Activated naive CD4-positive, alpha-beta T cell treated with anti-CD3 and anti-CD28 coated beads, Interleukin-2, amount 10 ng/mL, durations not matched to agents 7 days and 5 days (primary cell): ENCODE measurements at regions of chr1 and their contacts with region 1.

Region 1: GRCh38 chr1:205658943-205659581 is 21.2 kb downstream of the SLC45A3 start:
- DNase-seq: peak; percentile 86
- H3K4me3 Mint-ChIP-seq: no peak overlapping the region
- H3K27ac Mint-ChIP-seq: no peak overlapping the region
- H3K4me1 Mint-ChIP-seq: no peaks in the 10 kb centered on the region
- H3K27me3 Mint-ChIP-seq: peaks cover 39% of the 10 kb centered on the region

Region 2: GRCh38 chr1:205528887-205529825 is 129.9 kb before region 1 on chr1:
- CTCF ChIA-PET with region 1: interaction called, 238 read pairs
- DNase-seq: peak; percentile 86
- H3K4me3 Mint-ChIP-seq: no peak overlapping the region
- H3K27ac Mint-ChIP-seq: no peak overlapping the region
- H3K4me1 Mint-ChIP-seq: peaks cover 3% of the 10 kb centered on the region
- H3K27me3 Mint-ChIP-seq: peaks cover 21% of the 10 kb centered on the region

Region 3: GRCh38 chr1:205584732-205585131 is 74.3 kb before region 1 on chr1:
- CTCF ChIA-PET with region 1: interaction called, 337 read pairs
- DNase-seq: no peak
- H3K4me3 Mint-ChIP-seq: no peak overlapping the region
- H3K27ac Mint-ChIP-seq: no peak overlapping the region
- H3K4me1 Mint-ChIP-seq: no peaks in the 10 kb centered on the region
- H3K27me3 Mint-ChIP-seq: peaks cover 30% of the 10 kb centered on the region

Region 4: GRCh38 chr1:205631727-205632373 is 27.2 kb before region 1 on chr1 and contains the start of gene ELK4:
- CTCF ChIA-PET with region 1: interaction called, 72 read pairs
- DNase-seq: peak; percentile 100
- H3K4me3 Mint-ChIP-seq: peak within 1 kb of the TSS; percentile 87
- H3K27ac Mint-ChIP-seq: peak within 1 kb of the TSS; percentile 97
- H3K4me1 Mint-ChIP-seq: peaks cover 52% of the 10 kb centered on the region
- H3K27me3 Mint-ChIP-seq: peaks cover 4% of the 10 kb centered on the region

Region 5: GRCh38 chr1:205700865-205701401 is 41.9 kb after region 1 on chr1:
- CTCF ChIA-PET with region 1: interaction called, 205 read pairs
- DNase-seq: no peak
- H3K4me3 Mint-ChIP-seq: no peak overlapping the region
- H3K27ac Mint-ChIP-seq: no peak overlapping the region
- H3K4me1 Mint-ChIP-seq: peaks cover 7% of the 10 kb centered on the region
- H3K27me3 Mint-ChIP-seq: peaks cover 21% of the 10 kb centered on the region

Region 6: DNA sequence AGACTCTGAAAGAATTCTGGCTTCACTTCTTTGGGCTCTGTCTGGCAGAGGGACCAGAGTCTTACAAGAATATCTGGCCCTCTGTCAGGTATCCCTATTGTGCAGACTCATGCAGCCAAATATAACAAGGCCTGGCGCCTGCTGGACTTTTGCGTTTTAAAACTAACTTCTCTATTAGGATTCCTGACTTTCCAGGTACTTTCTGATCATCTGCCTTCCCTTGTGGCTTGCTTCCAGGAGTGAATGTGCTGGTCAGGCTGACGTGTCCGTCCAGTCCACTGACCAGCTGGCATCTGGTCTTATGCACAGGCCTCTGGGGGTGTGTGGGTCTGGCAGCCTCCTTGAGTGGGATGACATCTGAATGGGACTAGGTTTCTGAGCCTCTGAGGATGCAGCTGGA is 124.8 kb after region 1 on chr1:
- CTCF ChIA-PET with region 1: interaction called, 145 read pairs
- DNase-seq: no peak
- H3K4me3 Mint-ChIP-seq: no peak overlapping the region
- H3K27ac Mint-ChIP-seq: no peak overlapping the region
- H3K4me1 Mint-ChIP-seq: peaks cover 16% of the 10 kb centered on the region
- H3K27me3 Mint-ChIP-seq: peaks cover 4% of the 10 kb centered on the region

Region 7: GRCh38 chr1:205870236-205870635 is 211.2 kb after region 1 on chr1:
- CTCF ChIA-PET with region 1: no interaction called
- DNase-seq: no peak
- H3K4me3 Mint-ChIP-seq: no peak overlapping the region
- H3K27ac Mint-ChIP-seq: no peak overlapping the region
- H3K4me1 Mint-ChIP-seq: no peaks in the 10 kb centered on the region
- H3K27me3 Mint-ChIP-seq: peaks cover 3% of the 10 kb centered on the region

Region 8: GRCh38 chr1:205919026-205919746 is 260.1 kb after region 1 on chr1:
- CTCF ChIA-PET with region 1: interaction called, 26 read pairs
- DNase-seq: peak; percentile 84
- H3K4me3 Mint-ChIP-seq: no peak overlapping the region
- H3K27ac Mint-ChIP-seq: no peak overlapping the region
- H3K4me1 Mint-ChIP-seq: no peaks in the 10 kb centered on the region
- H3K27me3 Mint-ChIP-seq: peaks cover 22% of the 10 kb centered on the region